A549 (cell line): ENCODE measurements at regions of chr17 and their contacts with region 1.

Region 1: GRCh38 chr17:27601069-27601975 is 29.7 kb upstream of the LGALS9 start:
- DNase-seq: peak; percentile 77 to 81
- ATAC-seq: peak; percentile 39 to 61; a peak in 4 of 6 replicates
- H3K4me3 ChIP-seq: no peak overlapping the region
- H3K27ac ChIP-seq: peak overlapping the region in 1 of 2 experiments; percentile 8; a peak in 1 of 6 replicates
- H3K4me1 ChIP-seq: peaks cover 25% of the 10 kb centered on the region
- CTCF ChIP-seq: peak; percentile 98
- EP300 ChIP-seq: no peak
- POLR2A ChIP-seq: no peak
- RAD21 ChIP-seq: peak; percentile 95 to 99

Region 2: DNA sequence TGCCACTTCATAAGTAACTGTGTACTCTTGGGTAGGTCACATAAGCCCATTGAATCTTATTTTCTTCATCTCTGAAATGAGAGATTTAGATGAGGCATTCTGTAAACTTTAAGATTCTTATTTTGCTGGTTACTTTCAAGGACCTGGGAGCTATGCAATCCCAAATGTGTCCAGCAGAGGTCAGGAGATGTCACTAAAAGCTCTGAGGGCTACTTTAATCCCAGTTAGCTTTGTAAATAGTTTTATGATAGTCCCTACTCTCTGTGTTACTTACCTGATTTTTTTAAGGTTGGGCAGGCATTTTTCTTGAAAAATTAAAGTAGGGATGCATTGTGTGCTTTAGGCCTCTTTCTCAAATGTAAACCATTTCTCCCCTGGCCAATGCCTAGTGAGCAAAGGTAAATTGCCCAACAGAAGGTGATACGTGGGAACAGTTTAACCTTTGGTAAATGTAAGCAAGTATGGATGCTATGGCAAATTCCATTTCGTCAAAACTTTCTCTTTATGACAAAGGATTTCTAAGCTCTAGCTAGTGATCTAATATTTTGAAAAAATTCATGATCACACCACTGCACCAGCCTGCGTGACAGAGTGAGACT is 364.5 kb before region 1 on chr17:
- CTCF ChIA-PET with region 1: interaction called, 98 read pairs
- POLR2A ChIA-PET with region 1: no interaction called
- DNase-seq: peak; percentile 78 to 79
- ATAC-seq: peak; percentile 70 to 80; a peak in 4 of 6 replicates
- H3K4me3 ChIP-seq: no peak overlapping the region
- H3K27ac ChIP-seq: peak overlapping the region; percentile 2 to 31; a peak in 4 of 6 replicates
- H3K4me1 ChIP-seq: peaks cover 24% of the 10 kb centered on the region
- CTCF ChIP-seq: peak; percentile 96
- EP300 ChIP-seq: no peak
- POLR2A ChIP-seq: no peak
- RAD21 ChIP-seq: peak; percentile 93 to 96

Region 3: GRCh38 chr17:27381007-27381501 is 220.3 kb before region 1 on chr17:
- CTCF ChIA-PET with region 1: interaction called, 61 read pairs
- POLR2A ChIA-PET with region 1: no interaction called
- DNase-seq: peak; percentile 78 to 90
- ATAC-seq: peak; percentile 73 to 92
- H3K4me3 ChIP-seq: no peak overlapping the region; the same call in 2 of the 3 replicates
- H3K27ac ChIP-seq: peak overlapping the region in 1 of 2 experiments; percentile 71; a peak in 3 of 6 replicates
- H3K4me1 ChIP-seq: peaks cover 33% of the 10 kb centered on the region
- CTCF ChIP-seq: peak; percentile 96
- EP300 ChIP-seq: no peak
- POLR2A ChIP-seq: no peak
- RAD21 ChIP-seq: peak; percentile 62 to 66

Region 4: DNA sequence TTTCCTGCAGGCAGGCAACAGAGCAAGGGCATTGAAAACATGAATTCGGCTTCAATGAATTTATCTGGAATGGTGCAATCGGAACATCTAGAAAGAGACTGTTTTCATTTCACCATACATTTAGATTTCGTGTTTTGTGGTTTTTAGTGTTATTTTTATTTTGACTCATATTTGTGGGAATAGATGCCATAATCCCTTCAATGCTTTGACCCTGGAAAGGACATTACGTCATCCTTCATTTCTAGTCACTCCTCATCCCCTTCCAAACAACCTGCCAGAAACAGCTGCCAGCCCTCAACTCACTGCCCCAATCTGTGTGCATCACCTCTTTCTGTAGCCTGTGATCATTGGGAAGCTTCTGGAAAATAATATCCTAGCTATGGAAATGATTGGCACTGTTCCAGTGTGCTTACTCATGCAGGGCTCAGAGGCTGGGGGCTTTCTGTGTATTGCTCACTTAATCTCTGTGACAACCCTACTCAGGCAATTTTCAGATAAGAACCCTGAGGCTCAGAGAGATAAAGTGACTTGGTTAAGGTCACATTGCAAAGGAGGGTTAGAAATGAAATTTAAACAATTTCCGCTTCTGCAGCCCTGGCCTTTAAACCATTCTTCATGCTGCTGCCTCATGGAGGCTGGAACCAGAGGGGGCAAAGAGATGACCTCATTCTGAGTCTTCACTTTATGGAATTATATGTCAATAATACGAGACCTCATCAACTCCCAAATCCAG is 154.6 kb before region 1 on chr17:
- CTCF ChIA-PET with region 1: interaction called, 21 read pairs
- POLR2A ChIA-PET with region 1: no interaction called
- DNase-seq: peak in 1 of 2 experiments; percentile 38
- ATAC-seq: peak; percentile 45 to 67; a peak in 4 of 6 replicates
- H3K4me3 ChIP-seq: no peak overlapping the region
- H3K27ac ChIP-seq: peak overlapping the region in 1 of 2 experiments; percentile 60; a peak in 2 of 6 replicates
- H3K4me1 ChIP-seq: peaks cover 15% of the 10 kb centered on the region
- CTCF ChIP-seq: no peak
- EP300 ChIP-seq: no peak
- POLR2A ChIP-seq: no peak
- RAD21 ChIP-seq: no peak

Region 5: GRCh38 chr17:27513849-27514248 is 87.5 kb before region 1 on chr17:
- CTCF ChIA-PET with region 1: interaction called, 41 read pairs
- POLR2A ChIA-PET with region 1: no interaction called
- DNase-seq: no peak
- ATAC-seq: no peak
- H3K4me3 ChIP-seq: no peak overlapping the region
- H3K27ac ChIP-seq: no peak overlapping the region
- H3K4me1 ChIP-seq: peaks cover 8% of the 10 kb centered on the region; the same call in 2 of the 3 replicates
- CTCF ChIP-seq: no peak
- EP300 ChIP-seq: no peak
- POLR2A ChIP-seq: no peak
- RAD21 ChIP-seq: no peak

Region 6: GRCh38 chr17:27559506-27560481 is 41.5 kb before region 1 on chr17:
- CTCF ChIA-PET with region 1: interaction called, 76 read pairs
- POLR2A ChIA-PET with region 1: no interaction called
- DNase-seq: peak in 1 of 2 experiments; percentile 60
- ATAC-seq: peak; percentile 36 to 53; a peak in 4 of 6 replicates
- H3K4me3 ChIP-seq: no peak overlapping the region
- H3K27ac ChIP-seq: peak overlapping the region; percentile 67 to 84
- H3K4me1 ChIP-seq: peaks cover 43% of the 10 kb centered on the region
- CTCF ChIP-seq: no peak
- EP300 ChIP-seq: no peak
- POLR2A ChIP-seq: no peak
- RAD21 ChIP-seq: peak in 1 of 2 experiments; percentile 21; a peak in 1 of 5 replicates

Region 7: DNA sequence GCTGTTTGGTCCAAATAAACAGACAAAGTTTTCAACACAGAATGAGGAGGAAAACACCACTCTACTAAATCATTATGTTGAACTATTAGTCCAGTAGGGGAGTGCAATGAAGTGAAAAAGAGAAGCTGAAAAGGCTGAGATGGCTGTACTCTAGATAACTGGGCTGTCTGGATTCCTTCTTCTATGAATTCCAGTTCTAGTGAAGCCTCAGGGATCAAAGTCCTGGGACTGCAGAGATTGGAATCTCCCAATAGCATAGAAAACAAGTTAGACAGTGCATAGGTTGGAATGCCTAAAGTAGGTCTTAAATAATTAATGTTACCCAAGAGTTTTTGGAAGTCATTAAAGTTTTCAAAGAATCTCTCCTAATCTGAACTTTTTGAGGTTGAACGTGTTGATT is 89.6 kb after region 1 on chr17:
- CTCF ChIA-PET with region 1: no interaction called
- POLR2A ChIA-PET with region 1: no interaction called
- DNase-seq: no peak
- ATAC-seq: no peak
- H3K4me3 ChIP-seq: no peak overlapping the region
- H3K27ac ChIP-seq: no peak overlapping the region
- H3K4me1 ChIP-seq: peaks cover 7% of the 10 kb centered on the region; the same call in 1 of the 3 replicates
- CTCF ChIP-seq: no peak
- EP300 ChIP-seq: no peak
- POLR2A ChIP-seq: no peak
- RAD21 ChIP-seq: no peak

Region 8: GRCh38 chr17:27760069-27760885 is 159.0 kb after region 1 on chr17:
- CTCF ChIA-PET with region 1: interaction called, 35 read pairs
- POLR2A ChIA-PET with region 1: no interaction called
- DNase-seq: peak; percentile 45 to 58
- ATAC-seq: peak; percentile 44 to 82; a peak in 5 of 6 replicates
- H3K4me3 ChIP-seq: no peak overlapping the region
- H3K27ac ChIP-seq: no peak overlapping the region
- H3K4me1 ChIP-seq: no peaks in the 10 kb centered on the region
- CTCF ChIP-seq: peak; percentile 97
- EP300 ChIP-seq: no peak
- POLR2A ChIP-seq: no peak
- RAD21 ChIP-seq: peak; percentile 75 to 80